GM18951 (cell line): ENCODE measurements at regions of chr3 and their contacts with region 1.

Region 1: DNA sequence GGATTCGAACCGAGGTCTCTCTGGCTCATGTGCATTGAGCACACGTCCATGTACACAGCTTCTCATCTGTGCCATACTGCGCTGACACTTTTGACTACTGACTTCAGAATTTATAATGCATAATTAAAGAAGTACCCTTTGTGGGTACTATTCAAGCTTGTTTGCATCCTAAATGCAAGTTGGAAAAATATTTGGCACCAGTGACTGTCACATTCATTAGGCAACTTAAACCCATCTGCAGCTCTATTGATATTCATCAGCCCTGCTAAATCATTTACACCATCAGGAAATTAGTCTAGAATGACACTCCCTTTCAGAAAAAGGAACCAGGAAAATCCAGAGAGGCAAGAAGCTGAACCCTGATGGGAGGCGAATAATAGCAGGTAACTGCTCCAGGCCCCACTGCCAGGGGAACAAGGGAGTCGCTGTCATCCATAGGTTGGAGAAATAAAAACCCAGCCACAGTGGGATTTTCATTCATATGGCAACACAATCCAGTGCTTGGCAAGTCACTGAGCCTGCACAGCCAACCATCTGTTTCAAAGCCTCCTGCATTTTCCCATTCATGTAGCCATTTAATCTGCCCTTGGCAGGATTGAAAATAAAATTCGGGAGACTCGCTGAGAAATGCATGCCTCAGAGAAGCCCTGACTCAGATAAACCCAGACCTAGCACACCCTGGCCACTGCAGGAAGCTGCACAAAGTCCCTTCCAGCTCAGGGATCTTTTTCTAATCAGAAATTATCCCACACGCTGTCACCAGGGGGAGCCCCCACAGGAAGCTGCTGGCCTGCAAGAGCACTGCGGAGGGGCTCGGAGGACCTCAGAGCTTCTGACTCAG is 103.0 kb upstream of the VEPH1 start:
- POLR2A ChIP-seq: no peak

Region 2: GRCh38 chr3:158434412-158435038 is 828.3 kb after region 1 on chr3:
- in situ Hi-C with region 1: loop called (anchors 25 kb)
- POLR2A ChIP-seq: no peak

Region 3: GRCh38 chr3:158539414-158540014 is 933.3 kb after region 1 on chr3:
- in situ Hi-C with region 1: loop called (anchors 25 kb)
- POLR2A ChIP-seq: no peak

Region 4: DNA sequence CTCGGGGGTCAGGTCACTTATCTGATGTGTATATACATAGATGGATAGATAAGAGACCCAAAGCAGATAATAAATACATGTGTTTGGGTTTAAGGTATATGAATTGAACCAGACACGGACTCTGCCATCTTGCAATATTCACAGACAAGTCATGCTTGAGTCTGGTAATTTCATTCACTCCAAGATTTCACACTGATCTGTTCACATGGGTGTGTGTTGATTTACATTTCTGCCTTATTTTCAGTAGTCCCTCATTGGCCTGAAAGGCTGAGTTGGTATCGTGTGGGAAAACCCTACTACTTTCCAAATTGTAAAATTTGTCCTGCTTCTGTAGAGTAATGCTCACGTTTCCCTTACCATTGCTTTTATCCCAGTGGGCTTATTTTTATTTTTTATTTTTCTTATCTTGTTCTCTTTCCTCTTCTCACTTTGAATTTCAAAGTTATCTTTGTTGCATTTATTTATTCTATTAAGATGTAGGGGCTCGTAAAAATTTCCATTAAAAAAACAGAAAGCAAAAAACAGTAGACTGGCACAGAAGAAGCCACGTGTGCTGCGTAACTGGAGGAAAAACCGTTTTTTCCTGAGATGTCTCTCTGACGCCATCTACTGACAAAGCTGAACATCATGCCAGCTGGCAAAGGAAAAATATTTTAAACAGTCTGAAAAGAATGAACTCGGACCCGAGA is 1184.8 kb after region 1 on chr3:
- in situ Hi-C with region 1: loop called (anchors 25 kb)
- POLR2A ChIP-seq: no peak